ENCODE measurements at regions of chr6 and their contacts with region 1.

Region 1: DNA sequence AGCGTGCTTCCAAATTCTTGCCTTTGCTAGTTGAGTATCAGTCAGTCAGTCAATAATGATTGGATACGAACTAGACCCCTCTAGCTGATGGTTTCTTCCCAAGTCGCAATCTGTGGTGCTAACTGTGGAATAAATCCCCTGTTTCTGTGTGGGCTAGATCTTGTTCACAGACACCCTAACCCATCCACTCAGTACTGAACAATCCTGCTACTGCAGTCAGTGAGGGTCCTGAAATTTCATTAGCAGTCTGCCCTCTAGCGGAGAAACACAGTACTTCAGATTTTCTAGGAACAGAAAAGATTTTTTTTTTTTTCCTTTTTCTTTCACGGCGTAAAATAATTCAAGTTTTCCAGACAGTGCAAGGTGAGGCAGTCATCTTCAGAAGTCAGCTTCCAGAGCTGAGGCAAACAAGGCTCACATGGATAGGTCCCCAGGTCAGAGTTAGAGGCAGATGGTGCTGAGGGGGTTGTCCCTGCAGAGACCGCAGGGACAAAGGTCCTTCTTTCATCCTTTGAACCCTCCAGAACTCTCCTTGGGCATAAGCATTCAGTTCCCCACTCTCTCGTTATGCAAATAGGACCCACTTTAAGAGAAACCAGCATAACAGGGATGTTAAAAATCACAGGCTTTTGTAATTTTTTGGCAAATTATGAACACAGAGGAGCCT is 119.6 kb downstream of the SCML4 start:
- DNase-seq: peak; percentile 43
- CTCF ChIP-seq: peak; percentile 64

Region 2: DNA sequence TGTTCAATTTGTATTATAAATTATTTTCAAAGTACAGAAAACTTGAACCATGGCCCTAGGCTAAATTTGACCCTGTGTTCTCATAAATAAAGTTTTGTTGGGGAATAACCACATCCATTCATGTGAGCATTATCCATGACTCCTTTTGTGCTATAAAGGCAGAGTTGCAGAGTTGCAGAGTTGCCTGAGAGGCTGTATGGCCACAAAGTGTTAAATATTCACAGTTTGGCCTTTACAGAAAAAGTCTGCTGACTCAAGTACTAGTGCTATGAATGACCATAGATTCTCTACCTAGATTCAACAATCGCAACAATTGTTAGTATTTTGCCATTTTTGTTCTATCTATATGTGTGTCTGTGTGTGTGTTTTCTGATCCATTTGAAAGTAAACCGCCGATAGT is 543.0 kb before region 1 on chr6:
- CTCF ChIA-PET with region 1: no interaction called
- POLR2A ChIA-PET with region 1: no interaction called
- DNase-seq: no peak
- CTCF ChIP-seq: no peak

Region 3: DNA sequence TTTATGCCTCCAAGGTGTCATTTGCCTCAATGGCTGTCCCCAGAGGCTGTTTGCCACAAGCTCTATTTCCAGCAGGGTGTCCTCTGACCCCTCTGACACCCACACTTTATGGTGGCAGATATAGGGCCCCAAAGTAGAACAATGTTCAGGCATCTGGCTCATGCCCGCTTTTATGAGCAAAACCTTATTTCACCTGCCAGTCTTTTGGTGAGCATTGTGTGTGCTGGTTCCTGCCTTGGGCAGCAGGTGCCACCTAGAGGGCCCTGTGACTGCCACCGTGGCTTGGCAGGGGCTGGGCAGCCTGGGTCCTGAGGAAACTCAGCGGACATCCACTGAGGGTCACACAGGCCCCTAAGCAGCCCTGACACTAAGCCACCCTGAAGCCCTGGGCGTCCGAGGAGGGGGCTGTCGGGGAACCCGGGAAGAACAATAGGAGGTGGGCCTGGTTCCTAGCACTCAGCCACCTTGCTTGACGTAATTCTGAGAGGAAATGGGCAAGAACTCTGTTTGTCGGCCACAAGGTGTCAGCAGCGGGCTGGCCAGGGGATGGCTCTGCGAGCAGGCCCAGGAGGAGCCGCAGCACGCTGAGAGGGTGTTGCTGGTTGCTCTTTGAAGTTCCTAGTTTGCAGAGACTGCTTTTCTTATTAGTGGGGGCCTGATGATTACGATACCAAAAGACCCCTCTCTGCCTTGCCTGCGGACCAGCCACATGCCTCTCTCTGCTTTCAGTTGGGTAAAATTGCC is 29.3 kb before region 1 on chr6:
- CTCF ChIA-PET with region 1: interaction called, 12 read pairs
- POLR2A ChIA-PET with region 1: no interaction called
- DNase-seq: peak; percentile 88
- CTCF ChIP-seq: peak; percentile 96

Region 4: GRCh38 chr6:107684996-107685395 is 19.5 kb before region 1 on chr6:
- CTCF ChIA-PET with region 1: interaction called, 11 read pairs
- POLR2A ChIA-PET with region 1: no interaction called
- DNase-seq: no peak
- CTCF ChIP-seq: no peak

Measured in GM10248 (cell line).